ENCODE measurements at regions of chr15 and their contacts with region 1.

Region 1: GRCh38 chr15:38589502-38589901 is 24.9 kb upstream of the RASGRP1 start:
- DNase-seq: no peak
- ATAC-seq: peak in 1 of 8 donors; percentile 69
- H3K4me3 ChIP-seq: no peak overlapping the region
- H3K27ac ChIP-seq: no peak overlapping the region
- H3K4me1 ChIP-seq: no peaks in the 10 kb centered on the region
- H3K27me3 ChIP-seq: peaks cover 0 to 3% (median 0%) of the 10 kb centered on the region in 7 donors
- CTCF ChIP-seq: no peak

Region 2: DNA sequence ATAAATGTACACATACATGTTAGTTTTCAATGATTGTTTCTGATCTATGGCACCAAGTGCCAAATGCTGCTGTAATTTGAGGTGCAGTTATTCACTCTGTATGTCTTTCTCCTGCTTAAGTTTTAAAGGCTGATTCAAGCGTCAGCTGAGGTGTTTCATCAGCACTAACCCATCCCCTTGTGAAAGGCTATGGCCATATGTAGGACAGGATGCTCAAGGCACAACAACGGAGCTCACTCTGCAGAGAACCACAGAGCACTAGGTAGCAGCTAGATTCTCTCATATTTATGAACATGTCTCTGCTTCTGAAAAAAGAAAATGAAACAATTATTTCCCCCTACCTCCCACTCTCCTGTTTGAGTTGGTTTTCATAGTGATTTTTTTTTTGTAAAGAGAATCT is 995.1 kb before region 1 on chr15:
- intact Hi-C with region 1: no loop called
- DNase-seq: no peak
- ATAC-seq: no peak
- H3K4me3 ChIP-seq: no peak overlapping the region
- H3K27ac ChIP-seq: no peak overlapping the region
- H3K4me1 ChIP-seq: no peaks in the 10 kb centered on the region
- H3K27me3 ChIP-seq: peaks cover 0 to 5% (median 0%) of the 10 kb centered on the region in 7 donors
- CTCF ChIP-seq: no peak

Region 3: GRCh38 chr15:38536201-38536676 is 53.3 kb before region 1 on chr15:
- intact Hi-C with region 1: loop called in 1 of 10 experiments (anchors 5 kb)
- DNase-seq: peak in 1 of 2 donors; percentile 36
- ATAC-seq: peak in 7 of 8 donors; percentile 53 to 79 (median 59)
- H3K4me3 ChIP-seq: no peak overlapping the region
- H3K27ac ChIP-seq: peak overlapping the region in 4 of 10 donors; percentile 2 to 27 (median 9)
- H3K4me1 ChIP-seq: peaks cover 0 to 26% (median 13%) of the 10 kb centered on the region in 9 donors
- H3K27me3 ChIP-seq: no peaks in the 10 kb centered on the region
- CTCF ChIP-seq: no peak

Region 4: GRCh38 chr15:39517122-39517855 is 927.8 kb after region 1 on chr15:
- intact Hi-C with region 1: loop called in 1 of 10 experiments (anchors 5 kb)
- DNase-seq: no peak
- ATAC-seq: no peak
- H3K4me3 ChIP-seq: no peak overlapping the region
- H3K27ac ChIP-seq: no peak overlapping the region
- H3K4me1 ChIP-seq: peaks cover 0 to 10% (median 4%) of the 10 kb centered on the region in 9 donors
- H3K27me3 ChIP-seq: no peaks in the 10 kb centered on the region
- CTCF ChIP-seq: no peak

Measured in heart right ventricle (tissue), 16 donors.